Breast epithelium (tissue), 4 donors: ENCODE measurements at regions of chr10 and their contacts with region 1.

Region 1: DNA sequence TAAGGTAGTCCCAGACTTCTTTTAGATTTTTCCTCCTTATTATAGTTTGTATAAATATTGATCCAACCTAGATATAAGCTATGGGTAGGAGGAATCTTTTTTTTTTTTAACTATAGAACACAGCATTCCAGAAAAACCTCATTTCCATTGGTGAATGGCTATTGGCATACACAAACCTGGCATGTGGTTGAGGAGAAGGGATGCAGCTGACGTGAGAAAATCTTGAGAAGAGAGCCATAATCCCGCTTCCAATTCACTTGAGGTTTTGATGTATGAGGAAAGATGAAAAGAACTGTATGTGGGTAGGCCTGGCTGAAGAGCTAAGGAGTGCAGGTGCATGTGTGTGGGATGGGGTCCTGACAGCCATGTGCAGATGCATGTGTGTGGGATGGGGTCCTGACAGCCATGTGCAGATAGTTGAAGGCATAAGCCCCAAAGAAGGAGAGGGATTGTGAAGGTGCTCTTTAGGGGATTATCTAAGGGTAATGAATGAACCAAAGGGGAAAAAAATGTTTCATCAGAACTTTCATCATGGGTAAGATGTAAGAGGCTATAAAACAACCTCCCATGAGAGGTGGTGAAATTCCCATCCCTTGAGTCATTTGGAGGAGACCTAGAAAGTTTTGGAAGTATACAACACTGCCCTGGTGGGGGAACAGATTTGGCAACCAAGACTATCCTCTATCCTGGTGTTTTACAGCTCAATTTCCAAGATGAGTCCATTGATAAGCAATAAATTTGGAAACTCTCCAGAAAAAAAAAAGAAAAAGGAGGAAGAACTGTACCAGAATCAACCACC is 3.8 kb upstream of the PKD2L1 start:
- DNase-seq: no peak
- H3K4me3 ChIP-seq: no peak overlapping the region
- H3K27ac ChIP-seq: no peak overlapping the region
- H3K4me1 ChIP-seq: no peaks in the 10 kb centered on the region
- H3K27me3 ChIP-seq: peaks cover 0 to 26% of the 10 kb centered on the region in 2 donors
- CTCF ChIP-seq: no peak
- POLR2A ChIP-seq: no peak

Region 2: DNA sequence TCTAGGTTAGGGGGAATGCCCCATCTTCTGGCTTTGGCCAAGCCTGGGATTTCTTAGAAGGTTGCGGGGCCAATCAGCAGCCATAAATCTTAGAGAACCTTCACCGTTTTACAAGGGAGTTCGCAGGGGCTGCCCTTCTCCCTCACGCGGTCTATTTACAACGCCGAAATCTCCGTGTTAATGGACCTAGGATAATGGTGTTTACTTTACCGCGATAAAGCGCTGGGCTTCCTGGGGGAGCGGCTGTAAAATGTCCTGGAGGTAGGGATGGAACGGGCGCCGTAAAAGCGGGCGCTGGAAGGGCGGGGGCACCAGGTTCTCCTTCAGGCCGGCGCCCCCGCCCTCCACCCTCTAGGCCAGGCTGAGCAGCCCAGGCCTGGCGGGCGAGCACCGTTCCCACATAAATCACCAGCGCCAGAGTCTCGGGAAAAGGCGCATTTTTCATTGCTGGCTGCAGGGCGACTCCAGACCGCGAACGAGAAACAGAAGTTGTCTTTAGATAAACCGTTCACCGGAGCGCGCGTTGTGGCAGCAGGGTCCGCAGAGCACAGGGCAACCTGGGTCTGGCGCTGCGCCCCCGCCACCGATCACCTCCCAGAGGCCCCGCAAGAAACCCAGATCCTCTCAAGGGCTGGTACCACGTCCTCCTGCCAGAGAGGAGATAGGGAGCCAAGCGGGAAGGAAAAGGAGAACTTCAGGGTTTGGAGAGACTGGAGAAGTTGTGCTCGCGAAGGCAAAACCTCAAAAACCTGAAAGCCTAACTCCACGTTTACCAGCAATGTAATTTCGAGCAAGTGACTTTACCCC is 813.6 kb before region 1 on chr10:
- intact Hi-C with region 1: no loop called
- DNase-seq: no peak
- H3K4me3 ChIP-seq: no peak overlapping the region
- H3K27ac ChIP-seq: no peak overlapping the region
- H3K4me1 ChIP-seq: no peaks in the 10 kb centered on the region
- H3K27me3 ChIP-seq: peaks cover 6 to 67% of the 10 kb centered on the region in 2 donors
- CTCF ChIP-seq: no peak
- POLR2A ChIP-seq: no peak

Region 3: GRCh38 chr10:100267237-100268104 is 66.4 kb before region 1 on chr10 and contains the start of gene CWF19L1:
- intact Hi-C with region 1: no loop called
- DNase-seq: peak; percentile 81 to 88
- H3K4me3 ChIP-seq: peak within 1 kb of the TSS; percentile 89 to 96 (median 94)
- H3K27ac ChIP-seq: peak within 1 kb of the TSS; percentile 90 to 94
- H3K4me1 ChIP-seq: no peaks in the 10 kb centered on the region
- H3K27me3 ChIP-seq: no peaks in the 10 kb centered on the region
- CTCF ChIP-seq: no peak
- POLR2A ChIP-seq: peak; percentile 46
- total RNA-seq, gene CWF19L1: 22.6 to 31.2 (median 25.2) TPM

Region 4: DNA sequence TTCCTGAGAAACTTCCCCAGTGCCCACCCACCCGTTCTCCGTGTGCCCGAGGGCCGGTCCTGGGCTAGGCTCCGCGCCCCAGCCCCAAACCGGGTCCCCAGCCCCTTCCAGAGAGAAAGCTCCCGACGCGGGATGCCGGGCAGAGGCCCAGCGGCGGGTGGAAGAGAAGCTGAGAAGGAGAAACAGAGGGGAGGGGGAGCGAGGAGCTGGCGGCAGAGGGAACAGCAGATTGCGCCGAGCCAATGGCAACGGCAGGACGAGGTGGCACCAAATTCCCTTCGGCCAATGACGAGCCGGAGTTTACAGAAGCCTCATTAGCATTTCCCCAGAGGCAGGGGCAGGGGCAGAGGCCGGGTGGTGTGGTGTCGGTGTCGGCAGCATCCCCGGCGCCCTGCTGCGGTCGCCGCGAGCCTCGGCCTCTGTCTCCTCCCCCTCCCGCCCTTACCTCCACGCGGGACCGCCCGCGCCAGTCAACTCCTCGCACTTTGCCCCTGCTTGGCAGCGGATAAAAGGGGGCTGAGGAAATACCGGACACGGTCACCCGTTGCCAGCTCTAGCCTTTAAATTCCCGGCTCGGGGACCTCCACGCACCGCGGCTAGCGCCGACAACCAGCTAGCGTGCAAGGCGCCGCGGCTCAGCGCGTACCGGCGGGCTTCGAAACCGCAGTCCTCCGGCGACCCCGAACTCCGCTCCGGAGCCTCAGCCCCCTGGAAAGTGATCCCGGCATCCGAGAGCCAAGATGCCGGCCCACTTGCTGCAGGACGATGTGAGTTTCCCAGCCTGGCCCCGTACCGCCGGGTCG is 13.1 kb after region 1 on chr10 and contains the start of gene SCD:
- intact Hi-C with region 1: no loop called
- DNase-seq: peak; percentile 78 to 87
- H3K4me3 ChIP-seq: peak within 1 kb of the TSS; percentile 54 to 84 (median 71)
- H3K27ac ChIP-seq: peak within 1 kb of the TSS; percentile 4 to 67
- H3K4me1 ChIP-seq: peaks cover 0 to 3% of the 10 kb centered on the region in 2 donors
- H3K27me3 ChIP-seq: no peaks in the 10 kb centered on the region
- CTCF ChIP-seq: no peak
- POLR2A ChIP-seq: no peak
- total RNA-seq, gene SCD: 72.8 to 461 (median 112) TPM

Region 5: DNA sequence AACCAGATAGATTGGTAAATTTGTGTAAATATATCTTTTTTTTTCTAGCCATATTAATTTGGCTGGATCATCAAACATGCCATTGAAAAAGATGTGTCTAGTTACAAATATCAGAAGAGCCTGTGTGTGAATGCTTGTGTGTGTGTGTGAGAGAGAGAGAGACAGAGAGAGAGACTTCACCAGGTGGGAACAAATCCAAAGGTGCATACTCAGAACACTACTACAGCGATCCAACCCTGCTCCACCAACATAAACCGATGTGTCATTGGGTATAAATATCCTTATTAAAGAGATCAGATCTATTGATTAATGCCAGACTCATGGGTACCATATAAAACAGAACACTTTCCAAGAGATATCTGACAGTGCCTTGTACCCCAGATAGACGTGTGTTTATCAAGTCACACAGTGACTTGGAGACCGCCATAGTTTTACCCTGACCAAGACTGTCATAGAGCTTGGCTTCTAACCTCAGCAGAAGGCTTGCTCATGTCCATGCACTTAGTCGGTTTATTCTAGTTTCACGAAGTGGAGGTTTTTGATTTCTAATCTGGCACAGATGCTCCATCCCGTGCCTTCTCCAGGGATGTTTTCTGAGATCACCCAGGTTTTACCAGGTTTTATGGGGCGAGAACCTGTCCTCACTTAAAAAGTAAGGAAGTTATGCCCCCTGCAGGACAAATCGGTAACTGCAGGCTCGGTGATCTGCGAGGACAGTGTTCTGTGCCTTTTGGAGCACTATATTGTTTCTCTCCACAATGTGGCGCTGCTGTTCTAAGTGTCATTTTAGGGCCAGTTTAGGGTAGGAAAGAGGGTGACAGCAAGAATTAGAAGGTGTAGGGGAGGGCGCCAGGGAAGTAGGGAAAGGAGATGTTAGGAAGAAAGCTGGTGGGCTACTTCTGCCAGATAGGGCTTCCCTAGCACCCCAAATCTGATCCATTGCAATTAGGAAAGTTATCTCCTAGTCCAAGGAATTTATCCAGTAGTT is 99.7 kb after region 1 on chr10:
- intact Hi-C with region 1: loop called (anchors 2 kb)
- DNase-seq: peak; percentile 92 to 96
- H3K4me3 ChIP-seq: no peak overlapping the region
- H3K27ac ChIP-seq: no peak overlapping the region
- H3K4me1 ChIP-seq: no peaks in the 10 kb centered on the region
- H3K27me3 ChIP-seq: no peaks in the 10 kb centered on the region
- CTCF ChIP-seq: peak; percentile 100
- POLR2A ChIP-seq: no peak